H1 (cell line): ENCODE measurements at regions of chr4 and their contacts with region 1.

Region 1: DNA sequence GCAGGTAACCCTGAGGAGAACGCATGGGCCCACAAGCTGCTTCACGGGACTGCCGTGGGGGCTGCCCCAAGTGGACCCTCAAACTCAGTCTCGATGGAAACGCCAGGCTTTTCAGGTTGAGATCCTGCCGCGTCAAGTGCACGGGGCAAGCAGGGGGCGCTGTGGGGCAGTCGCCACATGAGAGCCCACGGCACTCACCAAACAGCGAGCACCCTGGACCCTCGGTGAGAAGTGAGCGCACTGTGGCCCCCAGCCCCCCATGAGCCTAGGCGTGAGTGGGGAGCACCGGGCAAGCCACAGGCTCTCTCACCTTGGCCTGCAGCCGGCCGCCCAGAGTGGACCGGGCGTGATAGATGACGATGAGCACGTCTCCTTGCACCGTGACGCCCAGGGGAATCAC is 50.9 kb upstream of the CPLX1 start:
- DNase-seq: peak in 1 of 2 experiments; percentile 79
- H3K4me3 ChIP-seq: no peak overlapping the region
- H3K27ac ChIP-seq: no peak overlapping the region
- H3K4me1 ChIP-seq: no peaks in the 10 kb centered on the region
- H3K27me3 ChIP-seq: no peaks in the 10 kb centered on the region
- CTCF ChIP-seq: peak in 2 of 3 experiments; percentile 62 to 80; a peak in 3 of 4 replicates
- EP300 ChIP-seq: no peak
- POLR2A ChIP-seq: no peak
- RAD21 ChIP-seq: peak; percentile 43 to 54

Region 2: DNA sequence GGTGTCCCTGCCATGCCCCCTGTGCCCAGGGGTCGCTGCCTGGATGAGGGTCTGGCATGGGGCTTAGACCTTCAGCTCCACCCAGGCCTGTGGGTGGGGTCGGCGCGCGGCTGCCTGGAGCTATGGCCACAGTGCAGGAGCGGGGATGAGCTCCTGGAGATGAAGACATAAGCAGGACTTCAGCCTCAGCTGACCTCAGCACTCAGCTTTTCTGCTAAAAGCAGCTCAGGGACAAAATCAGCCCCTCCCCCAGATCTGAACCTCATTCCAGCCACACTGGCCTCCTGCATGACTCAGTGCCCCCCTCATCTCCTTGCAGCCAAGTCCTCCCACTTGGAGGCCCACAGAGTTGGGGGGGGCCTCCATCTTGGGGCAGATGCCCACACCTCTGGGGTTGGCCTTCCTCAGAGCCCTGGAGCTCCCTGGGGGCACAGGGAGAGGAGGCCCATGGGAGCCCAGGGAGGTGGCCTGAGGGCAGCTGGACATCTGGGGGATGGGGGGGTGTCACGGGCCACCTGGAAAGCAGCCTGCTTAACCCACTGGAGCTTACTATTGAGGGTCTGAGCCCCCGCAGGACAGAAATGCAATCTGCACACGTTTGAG is 31.4 kb before region 1 on chr4:
- CTCF ChIA-PET with region 1: interaction called, 10 read pairs
- POLR2A ChIA-PET with region 1: interaction called, 3 read pairs
- DNase-seq: no peak
- H3K4me3 ChIP-seq: no peak overlapping the region
- H3K27ac ChIP-seq: no peak overlapping the region
- H3K4me1 ChIP-seq: peaks cover 0 to 4% (median 0%) of the 10 kb centered on the region in 4 experiments; a peak in 1 of 7 replicates
- H3K27me3 ChIP-seq: no peaks in the 10 kb centered on the region
- CTCF ChIP-seq: no peak
- EP300 ChIP-seq: no peak
- POLR2A ChIP-seq: no peak
- RAD21 ChIP-seq: no peak

Region 3: GRCh38 chr4:891747-892146 is 15.0 kb after region 1 on chr4:
- CTCF ChIA-PET with region 1: interaction called, 34 read pairs
- POLR2A ChIA-PET with region 1: interaction called, 5 read pairs
- DNase-seq: peak in 1 of 2 experiments; percentile 81
- H3K4me3 ChIP-seq: no peak overlapping the region
- H3K27ac ChIP-seq: no peak overlapping the region
- H3K4me1 ChIP-seq: no peaks in the 10 kb centered on the region
- H3K27me3 ChIP-seq: no peaks in the 10 kb centered on the region
- CTCF ChIP-seq: peak in 2 of 3 experiments; percentile 75 to 76; a peak in 3 of 4 replicates
- EP300 ChIP-seq: no peak
- POLR2A ChIP-seq: no peak
- RAD21 ChIP-seq: peak; percentile 54 to 69